ENCODE measurements at regions of chr18 and their contacts with region 1.

Region 1: GRCh38 chr18:21242141-21242779 is at the start of gene GREB1L:
- DNase-seq: peak; percentile 62
- ATAC-seq: peak; percentile 86
- H3K4me3 Mint-ChIP-seq: peak within 1 kb of the TSS; percentile 33
- H3K27ac Mint-ChIP-seq: no peak within 1 kb of the TSS
- H3K4me1 Mint-ChIP-seq: peaks cover 5% of the 10 kb centered on the region
- H3K27me3 Mint-ChIP-seq: peaks cover 52% of the 10 kb centered on the region
- total RNA-seq, gene GREB1L: not detected

Region 2: GRCh38 chr18:21284540-21284939 is 42.3 kb after region 1 on chr18:
- CTCF ChIA-PET with region 1: no interaction called
- POLR2A ChIA-PET with region 1: no interaction called
- intact Hi-C with region 1: no loop called
- DNase-seq: no peak
- ATAC-seq: no peak
- H3K4me3 Mint-ChIP-seq: no peak overlapping the region
- H3K27ac Mint-ChIP-seq: no peak overlapping the region
- H3K4me1 Mint-ChIP-seq: no peaks in the 10 kb centered on the region
- H3K27me3 Mint-ChIP-seq: peaks cover 6% of the 10 kb centered on the region

Region 3: GRCh38 chr18:21298351-21298750 is 56.1 kb after region 1 on chr18:
- CTCF ChIA-PET with region 1: no interaction called
- POLR2A ChIA-PET with region 1: no interaction called
- intact Hi-C with region 1: loop called in 1 of 2 experiments (anchors 10 kb)
- DNase-seq: no peak
- ATAC-seq: no peak
- H3K4me3 Mint-ChIP-seq: no peak overlapping the region
- H3K27ac Mint-ChIP-seq: no peak overlapping the region
- H3K4me1 Mint-ChIP-seq: no peaks in the 10 kb centered on the region
- H3K27me3 Mint-ChIP-seq: peaks cover 10% of the 10 kb centered on the region

Region 4: GRCh38 chr18:21682371-21683051 is 440.3 kb after region 1 on chr18:
- CTCF ChIA-PET with region 1: no interaction called
- POLR2A ChIA-PET with region 1: no interaction called
- intact Hi-C with region 1: no loop called
- DNase-seq: peak; percentile 36
- ATAC-seq: peak; percentile 89
- H3K4me3 Mint-ChIP-seq: no peak overlapping the region
- H3K27ac Mint-ChIP-seq: no peak overlapping the region
- H3K4me1 Mint-ChIP-seq: peaks cover 11% of the 10 kb centered on the region
- H3K27me3 Mint-ChIP-seq: no peaks in the 10 kb centered on the region